Breast epithelium (tissue), 4 donors: ENCODE measurements at regions of chr11 and their contacts with region 1.

Region 1: GRCh38 chr11:21472261-21472660 is 720.6 kb upstream of the ANO5 start:
- DNase-seq: no peak
- H3K4me3 ChIP-seq: no peak overlapping the region
- H3K27ac ChIP-seq: no peak overlapping the region
- H3K4me1 ChIP-seq: no peaks in the 10 kb centered on the region
- H3K27me3 ChIP-seq: no peaks in the 10 kb centered on the region
- CTCF ChIP-seq: no peak
- POLR2A ChIP-seq: no peak

Region 2: DNA sequence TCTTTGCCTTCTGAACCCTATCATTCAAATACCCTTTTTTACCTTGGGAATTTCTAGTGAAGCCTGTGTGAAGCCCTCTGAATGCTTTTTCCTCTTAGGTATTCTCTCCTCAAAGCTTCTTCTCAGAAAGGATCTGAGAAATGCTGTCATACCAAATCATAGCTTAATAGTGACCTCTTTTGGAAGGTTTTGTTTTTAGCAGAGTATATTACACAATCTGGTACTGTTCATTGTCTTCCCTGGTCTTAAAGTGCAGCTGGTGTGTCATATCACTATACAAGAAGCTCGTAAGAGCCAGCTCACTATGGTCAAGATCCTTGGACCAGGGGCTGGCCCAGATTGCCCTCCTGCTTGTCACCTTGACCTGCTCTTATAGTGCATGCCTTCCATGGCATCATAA is 516.2 kb after region 1 on chr11:
- intact Hi-C with region 1: loop called (anchors 10 kb)
- DNase-seq: no peak
- H3K4me3 ChIP-seq: no peak overlapping the region
- H3K27ac ChIP-seq: no peak overlapping the region
- H3K4me1 ChIP-seq: no peaks in the 10 kb centered on the region
- H3K27me3 ChIP-seq: no peaks in the 10 kb centered on the region
- CTCF ChIP-seq: no peak
- POLR2A ChIP-seq: no peak